Mammary epithelial cell (primary cell): ENCODE measurements at regions of chr15 and their contacts with region 1.

Region 1: GRCh38 chr15:65856821-65857455 is 12.4 kb upstream of the RAB11A start:
- DNase-seq: peak; percentile 37
- H3K4me3 ChIP-seq: no peak overlapping the region
- H3K27ac ChIP-seq: no peak overlapping the region
- H3K4me1 ChIP-seq: no peaks in the 10 kb centered on the region
- H3K27me3 ChIP-seq: no peaks in the 10 kb centered on the region
- CTCF ChIP-seq: peak; percentile 93 to 96

Region 2: DNA sequence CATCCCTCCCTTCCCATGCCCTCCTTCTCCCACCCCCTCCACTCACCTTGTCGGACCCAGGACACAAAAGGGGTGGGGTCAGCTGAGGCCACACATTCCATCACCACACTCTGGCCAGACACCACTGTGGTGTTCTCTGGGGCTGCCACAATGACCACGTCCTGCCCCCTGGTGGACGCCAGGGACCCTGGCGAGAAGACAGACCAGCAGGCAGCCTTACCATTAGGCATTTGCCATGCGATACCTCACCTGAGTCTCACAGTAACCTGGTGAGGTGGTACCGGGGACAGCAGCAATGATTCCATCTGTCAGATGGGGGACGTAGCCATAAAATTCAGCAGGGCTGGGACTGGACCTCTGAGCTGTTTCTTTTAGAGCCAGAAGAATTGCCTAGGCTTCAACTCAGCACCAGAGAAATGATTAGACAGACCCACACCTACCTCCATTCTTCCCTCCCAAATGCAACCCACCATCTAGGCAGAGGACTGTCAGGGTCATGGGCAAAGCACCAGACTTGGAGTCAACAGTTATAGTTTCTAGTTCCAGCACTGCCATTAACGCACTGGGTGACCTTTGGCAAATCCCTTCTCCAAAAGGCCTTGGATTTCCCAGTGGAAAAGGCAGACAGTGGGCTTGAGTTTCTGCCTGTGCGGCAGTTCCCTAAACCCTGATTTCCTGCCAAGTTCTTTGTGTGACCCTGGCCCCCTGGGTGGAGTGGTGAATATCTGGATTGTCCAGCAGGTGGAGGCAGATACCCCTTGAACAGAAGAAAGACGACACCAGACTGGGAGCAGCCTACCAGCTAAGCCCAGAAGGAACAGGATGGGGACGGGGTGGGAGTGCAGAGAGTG is 456.0 kb before region 1 on chr15:
- CTCF ChIA-PET with region 1: no interaction called
- dilution Hi-C with region 1: no loop called
- in situ Hi-C with region 1: no loop called
- intact Hi-C with region 1: loop called (anchors 10 kb)
- DNase-seq: peak; percentile 46
- H3K4me3 ChIP-seq: no peak overlapping the region
- H3K27ac ChIP-seq: no peak overlapping the region
- H3K4me1 ChIP-seq: no peaks in the 10 kb centered on the region
- H3K27me3 ChIP-seq: peaks cover 13% of the 10 kb centered on the region
- CTCF ChIP-seq: peak; percentile 91 to 95

Region 3: GRCh38 chr15:65476903-65477302 is 380.0 kb before region 1 on chr15:
- CTCF ChIA-PET with region 1: no interaction called
- dilution Hi-C with region 1: no loop called
- in situ Hi-C with region 1: no loop called
- intact Hi-C with region 1: no loop called
- DNase-seq: peak; percentile 9
- H3K4me3 ChIP-seq: no peak overlapping the region
- H3K27ac ChIP-seq: no peak overlapping the region
- H3K4me1 ChIP-seq: no peaks in the 10 kb centered on the region
- H3K27me3 ChIP-seq: no peaks in the 10 kb centered on the region
- CTCF ChIP-seq: no peak

Region 4: DNA sequence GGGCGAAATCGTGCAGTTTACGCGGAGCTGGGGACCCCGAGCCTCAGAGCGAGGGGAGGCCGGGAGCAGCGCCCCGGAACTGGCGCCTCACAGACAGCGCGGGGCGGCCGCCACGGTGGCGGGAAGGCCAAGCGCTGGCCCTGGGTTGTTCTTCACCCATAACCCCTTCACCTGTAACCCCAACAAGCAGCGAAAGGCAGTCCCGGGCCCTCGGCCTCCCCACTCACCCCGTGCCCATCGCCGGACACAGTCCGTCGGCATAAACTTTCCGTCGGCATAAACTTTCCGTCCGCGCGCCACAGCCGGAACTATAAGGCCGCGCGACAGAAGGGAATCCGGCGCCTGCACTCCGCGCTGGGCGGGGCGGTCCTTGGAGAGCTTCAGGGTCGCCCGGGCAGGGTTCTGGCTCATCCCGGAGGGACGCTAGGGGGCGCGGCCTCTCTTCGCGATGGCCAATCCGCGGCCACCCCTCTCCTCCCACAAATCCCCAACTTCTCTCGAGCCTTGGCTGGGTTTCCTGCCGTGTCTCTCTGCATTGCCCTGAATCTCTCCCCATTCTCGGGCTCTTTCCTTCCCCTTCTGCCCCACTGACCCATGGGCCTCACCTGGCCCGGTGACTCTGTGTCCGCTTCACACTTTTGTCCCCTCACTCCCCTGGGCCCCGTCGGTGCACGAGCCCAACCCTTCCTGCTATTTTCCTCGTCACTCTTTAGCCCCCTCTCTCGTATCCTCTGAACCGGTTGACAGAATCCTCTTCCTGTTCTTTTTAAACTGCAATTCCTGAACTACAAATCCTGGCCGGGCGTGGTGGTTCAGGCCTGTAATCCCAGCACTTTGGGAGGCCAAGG is 245.8 kb before region 1 on chr15 and contains the start of gene INTS14:
- CTCF ChIA-PET with region 1: no interaction called
- dilution Hi-C with region 1: no loop called
- in situ Hi-C with region 1: no loop called
- intact Hi-C with region 1: loop called (anchors 1 kb)
- DNase-seq: peak; percentile 95
- H3K4me3 ChIP-seq: peak within 1 kb of the TSS; percentile 67 to 85 (median 80)
- H3K27ac ChIP-seq: peak within 1 kb of the TSS; percentile 78
- H3K4me1 ChIP-seq: peaks cover 22% of the 10 kb centered on the region
- H3K27me3 ChIP-seq: no peaks in the 10 kb centered on the region
- CTCF ChIP-seq: peak in 1 of 2 donors; percentile 55
- total RNA-seq, gene INTS14: 38.9 to 41.8 TPM

Region 5: GRCh38 chr15:65638681-65639089 is 218.3 kb before region 1 on chr15:
- CTCF ChIA-PET with region 1: no interaction called
- dilution Hi-C with region 1: no loop called
- in situ Hi-C with region 1: loop called in 1 of 2 experiments (anchors 10 kb)
- intact Hi-C with region 1: loop called (anchors 1 kb)
- DNase-seq: peak; percentile 71
- H3K4me3 ChIP-seq: no peak overlapping the region
- H3K27ac ChIP-seq: no peak overlapping the region
- H3K4me1 ChIP-seq: no peaks in the 10 kb centered on the region
- H3K27me3 ChIP-seq: no peaks in the 10 kb centered on the region
- CTCF ChIP-seq: peak; percentile 79 to 84

Region 6: DNA sequence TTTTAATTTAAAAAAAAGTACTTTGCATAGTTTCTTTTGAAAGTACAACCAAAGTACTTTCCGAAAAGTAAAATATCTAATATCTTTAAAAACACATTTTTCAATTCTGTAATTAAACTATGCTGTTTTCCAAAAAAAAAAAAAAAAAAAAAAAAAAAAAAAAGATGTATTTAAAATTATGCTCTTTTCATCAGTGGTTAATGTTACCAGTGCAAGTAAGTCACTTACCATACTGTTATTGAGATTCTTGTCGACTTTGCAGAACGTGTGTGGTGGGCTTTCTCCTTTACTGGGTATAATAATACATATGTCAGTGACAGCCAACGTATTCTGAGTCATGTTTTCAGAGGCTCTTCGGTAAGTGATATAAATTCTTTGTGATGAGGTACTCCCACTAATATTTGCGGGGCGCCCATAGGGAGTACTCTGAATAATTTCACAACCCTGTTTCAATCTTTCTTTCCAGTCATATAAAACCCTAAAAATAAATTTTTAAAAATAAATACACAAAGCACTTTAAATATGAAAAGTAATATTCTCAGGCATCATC is 104.7 kb before region 1 on chr15:
- CTCF ChIA-PET with region 1: no interaction called
- dilution Hi-C with region 1: no loop called
- in situ Hi-C with region 1: no loop called
- intact Hi-C with region 1: no loop called
- DNase-seq: no peak
- H3K4me3 ChIP-seq: no peak overlapping the region
- H3K27ac ChIP-seq: no peak overlapping the region
- H3K4me1 ChIP-seq: no peaks in the 10 kb centered on the region
- H3K27me3 ChIP-seq: no peaks in the 10 kb centered on the region
- CTCF ChIP-seq: no peak